ENCODE measurements at regions of chr1 and their contacts with region 1.

Region 1: DNA sequence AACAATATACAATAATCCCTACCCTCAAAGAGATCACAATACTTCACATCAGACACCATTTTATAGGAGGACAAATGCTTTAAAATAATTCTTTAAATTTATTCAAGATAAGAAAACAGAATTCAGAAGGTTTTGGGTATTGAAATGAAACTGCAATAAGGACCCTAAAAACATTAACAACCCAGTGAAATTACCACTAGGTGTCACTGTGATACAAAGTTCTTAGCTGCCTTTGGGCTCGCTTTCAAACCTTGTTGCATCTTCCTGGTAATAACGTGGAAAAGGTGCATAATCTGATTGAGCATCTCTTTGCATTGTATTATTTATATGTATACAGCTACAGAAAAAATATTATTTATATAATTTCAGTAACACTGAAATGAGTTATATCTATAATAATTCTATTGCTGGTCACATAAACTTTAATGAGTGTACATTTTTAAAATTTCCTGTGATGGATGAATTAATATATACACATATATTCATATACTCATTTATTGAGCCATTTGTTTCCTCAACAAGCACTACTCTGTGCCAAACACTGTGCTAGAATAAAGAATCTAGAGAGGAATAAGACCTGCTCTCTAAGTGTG is 185.2 kb downstream of the FAF1 start:
- DNase-seq: no peak
- H3K4me3 ChIP-seq: no peak overlapping the region
- H3K27ac ChIP-seq: no peak overlapping the region
- H3K4me1 ChIP-seq: no peaks in the 10 kb centered on the region
- H3K27me3 ChIP-seq: no peaks in the 10 kb centered on the region
- CTCF ChIP-seq: peak in 2 of 3 experiments; percentile 58 to 73

Region 2: GRCh38 chr1:50735443-50735842 is 39.4 kb before region 1 on chr1:
- intact Hi-C with region 1: no loop called
- DNase-seq: no peak
- H3K4me3 ChIP-seq: no peak overlapping the region
- H3K27ac ChIP-seq: no peak overlapping the region
- H3K4me1 ChIP-seq: peaks cover 0 to 4% of the 10 kb centered on the region in 2 donors
- H3K27me3 ChIP-seq: no peaks in the 10 kb centered on the region
- CTCF ChIP-seq: peak in 2 of 3 experiments; percentile 30 to 37

Region 3: GRCh38 chr1:50852889-50853288 is 78.0 kb after region 1 on chr1:
- intact Hi-C with region 1: no loop called
- DNase-seq: no peak
- H3K4me3 ChIP-seq: no peak overlapping the region
- H3K27ac ChIP-seq: no peak overlapping the region
- H3K4me1 ChIP-seq: no peaks in the 10 kb centered on the region
- H3K27me3 ChIP-seq: no peaks in the 10 kb centered on the region
- CTCF ChIP-seq: no peak

Region 4: GRCh38 chr1:50981741-50982140 is 206.9 kb after region 1 on chr1:
- intact Hi-C with region 1: no loop called
- DNase-seq: no peak
- H3K4me3 ChIP-seq: peak overlapping the region; percentile 34 to 47
- H3K27ac ChIP-seq: peak overlapping the region; percentile 15 to 92
- H3K4me1 ChIP-seq: no peaks in the 10 kb centered on the region
- H3K27me3 ChIP-seq: no peaks in the 10 kb centered on the region
- CTCF ChIP-seq: no peak

Region 5: DNA sequence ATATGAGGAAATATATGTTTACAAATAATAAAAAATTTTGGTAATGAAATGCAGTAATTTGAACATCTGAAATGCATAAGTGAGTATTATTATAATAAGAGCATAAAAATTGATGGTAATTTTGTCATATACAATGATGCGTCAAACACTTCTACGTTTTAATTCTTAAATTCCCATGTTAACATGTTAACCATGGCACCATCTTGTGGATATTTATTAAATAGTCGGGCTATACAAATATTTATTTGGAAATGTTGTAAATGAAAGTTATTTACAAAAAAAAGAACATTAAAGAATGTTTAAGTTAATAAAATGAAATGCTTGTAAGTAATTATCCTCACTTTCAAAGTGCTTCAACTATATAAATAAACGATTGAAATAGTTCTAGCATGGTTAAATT is 270.0 kb after region 1 on chr1:
- intact Hi-C with region 1: loop called (anchors 2 kb)
- DNase-seq: no peak
- H3K4me3 ChIP-seq: no peak overlapping the region
- H3K27ac ChIP-seq: no peak overlapping the region
- H3K4me1 ChIP-seq: no peaks in the 10 kb centered on the region
- H3K27me3 ChIP-seq: no peaks in the 10 kb centered on the region
- CTCF ChIP-seq: peak in 1 of 3 experiments; percentile 29

Region 6: GRCh38 chr1:51192213-51192843 is 417.5 kb after region 1 on chr1:
- intact Hi-C with region 1: loop called (anchors 1 kb)
- DNase-seq: peak in 1 of 2 donors; percentile 80
- H3K4me3 ChIP-seq: no peak overlapping the region
- H3K27ac ChIP-seq: no peak overlapping the region
- H3K4me1 ChIP-seq: no peaks in the 10 kb centered on the region
- H3K27me3 ChIP-seq: no peaks in the 10 kb centered on the region
- CTCF ChIP-seq: peak; percentile 40 to 89 (median 85)